ENCODE measurements at regions of chr9 and their contacts with region 1.

Region 1: DNA sequence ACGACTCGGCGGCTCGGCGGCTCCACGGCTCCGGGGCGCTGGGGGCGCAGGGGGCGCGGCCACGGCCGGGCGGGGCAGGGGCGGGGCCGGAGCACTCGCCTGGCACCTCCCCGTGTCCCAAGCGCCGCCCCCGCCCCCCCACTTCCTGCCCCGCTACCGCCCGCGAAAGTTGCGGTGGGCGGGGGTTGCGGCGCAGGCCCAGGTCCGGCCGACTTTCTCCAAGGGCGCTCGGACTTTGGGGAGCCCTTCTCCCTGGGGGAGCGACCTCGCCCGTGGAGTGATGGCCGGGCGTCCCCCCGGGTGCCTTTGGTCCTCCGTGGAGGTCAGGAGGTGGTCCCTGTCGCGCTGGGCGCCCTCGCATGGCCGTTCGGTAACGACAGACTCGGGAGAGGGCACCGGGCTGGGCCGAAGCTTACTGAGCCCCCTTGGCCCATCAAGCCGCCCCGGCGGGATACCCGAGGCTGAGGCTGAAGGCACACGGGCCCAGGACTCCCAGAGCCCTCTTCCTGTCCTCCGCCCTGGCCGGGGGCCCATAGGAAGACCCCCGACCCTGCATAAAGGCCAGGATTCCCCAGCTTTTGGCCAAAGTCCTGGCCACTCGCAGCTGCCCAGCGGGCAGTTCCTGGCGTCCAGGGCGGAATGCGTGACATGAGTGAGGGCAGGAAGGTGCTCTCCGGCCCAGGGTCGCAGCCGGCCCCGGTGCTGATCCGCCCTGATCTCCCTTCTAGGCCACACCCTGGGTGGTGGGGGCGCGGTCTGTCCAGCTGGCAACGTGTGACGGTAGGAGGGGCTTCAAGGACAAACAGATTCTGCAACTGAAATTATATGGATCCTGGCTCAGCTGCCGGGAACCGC is 883 bp upstream of the VAV2 start:
- DNase-seq: peak; percentile 62
- H3K4me3 ChIP-seq: peak overlapping the region; percentile 85
- H3K27me3 ChIP-seq: peaks cover 2% of the 10 kb centered on the region; the same call in 1 of the 2 replicates
- CTCF ChIP-seq: peak; percentile 55

Region 2: GRCh38 chr9:133773889-133774655 is 218.9 kb before region 1 on chr9:
- CTCF ChIA-PET with region 1: interaction called, 140 read pairs
- POLR2A ChIA-PET with region 1: no interaction called
- DNase-seq: peak; percentile 34
- H3K4me3 ChIP-seq: no peak overlapping the region
- H3K27me3 ChIP-seq: no peaks in the 10 kb centered on the region
- CTCF ChIP-seq: no peak

Region 3: DNA sequence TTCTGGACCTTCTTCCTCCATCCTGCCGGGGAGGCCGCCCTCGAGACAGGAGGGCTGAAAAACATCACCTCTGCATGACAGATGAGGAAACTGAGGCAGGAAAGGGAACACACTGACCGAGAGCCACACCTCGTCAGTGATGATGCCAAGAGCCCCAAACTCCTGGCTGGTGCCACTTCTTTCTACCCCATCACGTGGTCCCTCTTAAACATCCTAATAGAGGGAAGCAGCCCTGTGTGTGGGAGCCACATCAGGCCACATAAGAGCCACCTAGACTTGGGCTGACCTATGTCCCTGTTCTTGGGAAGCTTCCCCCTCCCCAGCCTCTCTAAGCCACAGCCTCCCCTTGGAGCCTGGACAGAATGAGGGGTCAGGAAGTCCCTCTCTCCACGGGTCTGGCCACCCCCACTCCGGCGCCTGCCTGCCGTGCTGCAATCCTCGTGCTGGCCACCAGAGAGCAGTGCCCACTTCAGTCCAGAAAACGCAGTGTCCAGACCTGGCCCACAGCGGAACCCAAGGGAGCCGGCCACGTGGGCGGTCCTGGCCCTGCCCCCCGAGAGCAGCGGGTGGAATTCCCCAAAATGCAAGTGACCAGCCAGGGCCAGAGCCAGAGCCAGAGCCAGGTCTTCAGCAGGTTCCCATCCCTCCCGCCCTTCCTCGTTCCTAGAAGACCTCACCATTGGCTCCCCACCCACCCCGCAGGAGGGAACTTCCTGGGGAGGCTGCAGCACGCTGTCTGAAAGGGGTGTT is 200.1 kb before region 1 on chr9:
- CTCF ChIA-PET with region 1: interaction called, 221 read pairs
- POLR2A ChIA-PET with region 1: no interaction called
- DNase-seq: peak; percentile 12
- H3K4me3 ChIP-seq: no peak overlapping the region
- H3K27me3 ChIP-seq: no peaks in the 10 kb centered on the region
- CTCF ChIP-seq: peak; percentile 98

Region 4: GRCh38 chr9:133839822-133840329 is 153.1 kb before region 1 on chr9:
- CTCF ChIA-PET with region 1: interaction called, 12 read pairs
- POLR2A ChIA-PET with region 1: no interaction called
- DNase-seq: no peak
- H3K4me3 ChIP-seq: no peak overlapping the region
- H3K27me3 ChIP-seq: no peaks in the 10 kb centered on the region
- CTCF ChIP-seq: no peak

Region 5: GRCh38 chr9:133943781-133944745 is 48.9 kb before region 1 on chr9:
- CTCF ChIA-PET with region 1: no interaction called
- POLR2A ChIA-PET with region 1: no interaction called
- DNase-seq: no peak
- H3K4me3 ChIP-seq: no peak overlapping the region
- H3K27me3 ChIP-seq: no peaks in the 10 kb centered on the region
- CTCF ChIP-seq: no peak

Region 6: GRCh38 chr9:134007150-134007549 is 14.1 kb after region 1 on chr9:
- CTCF ChIA-PET with region 1: interaction called, 39 read pairs
- POLR2A ChIA-PET with region 1: no interaction called
- DNase-seq: no peak
- H3K4me3 ChIP-seq: no peak overlapping the region
- H3K27me3 ChIP-seq: no peaks in the 10 kb centered on the region
- CTCF ChIP-seq: no peak

Region 7: GRCh38 chr9:134049236-134049635 is 56.2 kb after region 1 on chr9:
- CTCF ChIA-PET with region 1: no interaction called
- POLR2A ChIA-PET with region 1: no interaction called
- DNase-seq: no peak
- H3K4me3 ChIP-seq: no peak overlapping the region
- H3K27me3 ChIP-seq: no peaks in the 10 kb centered on the region
- CTCF ChIP-seq: no peak

Region 8: GRCh38 chr9:134236001-134236421 is 243.0 kb after region 1 on chr9:
- CTCF ChIA-PET with region 1: no interaction called
- POLR2A ChIA-PET with region 1: no interaction called
- DNase-seq: no peak
- H3K4me3 ChIP-seq: no peak overlapping the region
- H3K27me3 ChIP-seq: peaks cover 4% of the 10 kb centered on the region
- CTCF ChIP-seq: no peak

Measured in BJ (cell line).